SK-N-SH (cell line): ENCODE measurements at regions of chr2 and their contacts with region 1.

Region 1: GRCh38 chr2:67840460-67841068 is 222.2 kb downstream of the C1D start:
- DNase-seq: peak; percentile 73
- H3K4me3 ChIP-seq: 0 out of 4 replicates have a peak overlapping the region, but pooled peaks of 1 of the 2 experiments have one; percentile 22
- H3K27ac ChIP-seq: peak overlapping the region in 1 of 2 experiments; percentile 81; a peak in 2 of 4 replicates
- H3K4me1 ChIP-seq: peaks cover 5 to 20% of the 10 kb centered on the region in 2 experiments; a peak in 3 of 4 replicates
- H3K27me3 ChIP-seq: no peaks in the 10 kb centered on the region
- CTCF ChIP-seq: peak; percentile 93
- EP300 ChIP-seq: peak in 1 of 2 experiments; percentile 96; a peak in 2 of 4 replicates
- RAD21 ChIP-seq: peak; percentile 100

Region 2: GRCh38 chr2:66434679-66435548 is 1405.7 kb before region 1 on chr2 and contains the start of gene MEIS1:
- CTCF ChIA-PET with region 1: interaction called, 41 read pairs
- POLR2A ChIA-PET with region 1: interaction called, 5 read pairs
- DNase-seq: peak; percentile 88
- H3K4me3 ChIP-seq: peak within 1 kb of the TSS; percentile 85 to 90
- H3K27ac ChIP-seq: peak within 1 kb of the TSS; percentile 76 to 81
- H3K4me1 ChIP-seq: peaks cover 0 to 20% of the 10 kb centered on the region in 2 experiments; a peak in 2 of 4 replicates
- H3K27me3 ChIP-seq: no peaks in the 10 kb centered on the region
- CTCF ChIP-seq: peak; percentile 11; the same call in 1 of the 2 replicates
- EP300 ChIP-seq: peak in 1 of 2 experiments; percentile 5; a peak in 1 of 4 replicates
- RAD21 ChIP-seq: peak; percentile 22
- polyA plus RNA-seq, gene MEIS1: 16.9 and 21.8 TPM in 2 replicates

Region 3: GRCh38 chr2:67476809-67477790 is 363.5 kb before region 1 on chr2:
- CTCF ChIA-PET with region 1: interaction called, 11 read pairs
- POLR2A ChIA-PET with region 1: no interaction called
- DNase-seq: peak; percentile 33
- H3K4me3 ChIP-seq: no peak overlapping the region
- H3K27ac ChIP-seq: peak overlapping the region in 1 of 2 experiments; percentile 22; a peak in 1 of 4 replicates
- H3K4me1 ChIP-seq: no peaks in the 10 kb centered on the region; a peak in 2 of 4 replicates
- H3K27me3 ChIP-seq: no peaks in the 10 kb centered on the region
- CTCF ChIP-seq: peak; percentile 73
- EP300 ChIP-seq: no peak
- RAD21 ChIP-seq: peak; percentile 84

Region 4: GRCh38 chr2:67666386-67667053 is 174.0 kb before region 1 on chr2:
- CTCF ChIA-PET with region 1: interaction called, 10 read pairs
- POLR2A ChIA-PET with region 1: no interaction called
- DNase-seq: no peak
- H3K4me3 ChIP-seq: no peak overlapping the region
- H3K27ac ChIP-seq: peak overlapping the region in 1 of 2 experiments; percentile 72; a peak in 2 of 4 replicates
- H3K4me1 ChIP-seq: peaks cover 0 to 14% of the 10 kb centered on the region in 2 experiments; a peak in 2 of 4 replicates
- H3K27me3 ChIP-seq: no peaks in the 10 kb centered on the region
- CTCF ChIP-seq: no peak
- EP300 ChIP-seq: no peak
- RAD21 ChIP-seq: no peak

Region 5: DNA sequence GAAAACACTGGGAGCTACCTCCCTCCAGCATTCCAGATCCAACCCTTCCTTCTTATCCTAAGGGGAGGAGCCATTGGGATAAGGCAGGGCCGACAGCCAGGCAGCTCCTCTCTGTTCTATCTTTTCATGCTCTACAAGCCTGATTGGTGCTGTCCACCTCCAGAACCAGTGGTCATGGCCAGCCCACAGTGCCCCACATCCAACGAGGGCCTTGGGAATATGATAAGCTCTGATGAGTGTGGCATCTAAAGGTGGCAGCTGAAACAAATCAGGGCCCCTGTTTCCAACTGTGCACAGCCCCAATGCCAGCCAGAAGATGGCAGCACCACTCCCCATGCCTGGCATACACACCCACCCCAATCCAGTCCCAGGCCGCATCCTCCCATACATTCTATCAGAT is 107.0 kb before region 1 on chr2:
- CTCF ChIA-PET with region 1: interaction called, 26 read pairs
- POLR2A ChIA-PET with region 1: no interaction called
- DNase-seq: peak; percentile 54
- H3K4me3 ChIP-seq: no peak overlapping the region
- H3K27ac ChIP-seq: peak overlapping the region in 1 of 2 experiments; percentile 16; a peak in 1 of 4 replicates
- H3K4me1 ChIP-seq: peaks cover 0 to 3% of the 10 kb centered on the region in 2 experiments; a peak in 1 of 4 replicates
- H3K27me3 ChIP-seq: no peaks in the 10 kb centered on the region
- CTCF ChIP-seq: peak; percentile 48
- EP300 ChIP-seq: no peak
- RAD21 ChIP-seq: peak; percentile 63

Region 6: GRCh38 chr2:67760995-67761394 is 79.6 kb before region 1 on chr2:
- CTCF ChIA-PET with region 1: interaction called, 12 read pairs
- POLR2A ChIA-PET with region 1: interaction called, 3 read pairs
- DNase-seq: no peak
- H3K4me3 ChIP-seq: no peak overlapping the region
- H3K27ac ChIP-seq: no peak overlapping the region
- H3K4me1 ChIP-seq: peaks cover 0 to 19% of the 10 kb centered on the region in 2 experiments; a peak in 3 of 4 replicates
- H3K27me3 ChIP-seq: no peaks in the 10 kb centered on the region
- CTCF ChIP-seq: no peak
- EP300 ChIP-seq: no peak
- RAD21 ChIP-seq: no peak

Region 7: DNA sequence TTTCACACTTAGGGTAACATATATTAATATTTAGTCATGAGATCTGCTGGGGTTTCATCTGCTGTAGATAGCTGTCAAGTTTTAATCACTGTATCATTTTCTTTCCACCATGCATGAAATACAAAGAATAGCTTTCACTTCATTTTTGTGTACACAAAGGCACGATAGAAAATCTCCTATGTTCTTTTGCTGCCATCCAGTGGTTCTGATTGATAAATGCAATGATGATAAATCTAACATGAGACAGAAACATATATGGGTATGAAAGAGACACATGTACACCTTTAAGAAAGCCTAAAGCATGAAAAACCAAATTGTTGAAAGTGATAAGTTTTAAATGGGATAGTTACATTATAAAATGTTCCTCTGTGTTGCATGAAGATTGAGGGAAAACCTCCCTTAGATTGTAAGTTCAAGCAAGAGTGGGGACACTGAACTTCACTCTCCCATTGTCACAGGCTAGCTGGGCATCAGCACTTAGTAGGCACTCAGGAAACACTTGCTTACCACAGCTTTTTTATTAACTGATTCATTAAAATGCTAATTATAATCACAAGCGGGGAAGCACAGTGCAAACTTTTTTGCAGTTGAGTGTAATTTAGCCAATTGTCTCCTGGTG is 191.1 kb after region 1 on chr2:
- CTCF ChIA-PET with region 1: interaction called, 150 read pairs
- POLR2A ChIA-PET with region 1: no interaction called
- DNase-seq: peak; percentile 48
- H3K4me3 ChIP-seq: no peak overlapping the region
- H3K27ac ChIP-seq: peak overlapping the region; percentile 50 to 80
- H3K4me1 ChIP-seq: peaks cover 4 to 23% of the 10 kb centered on the region in 2 experiments
- H3K27me3 ChIP-seq: no peaks in the 10 kb centered on the region
- CTCF ChIP-seq: peak; percentile 77
- EP300 ChIP-seq: no peak
- RAD21 ChIP-seq: peak; percentile 97

Region 8: GRCh38 chr2:68134554-68134953 is 294.0 kb after region 1 on chr2:
- CTCF ChIA-PET with region 1: no interaction called
- POLR2A ChIA-PET with region 1: no interaction called
- DNase-seq: no peak
- H3K4me3 ChIP-seq: no peak overlapping the region
- H3K27ac ChIP-seq: no peak overlapping the region
- H3K4me1 ChIP-seq: no peaks in the 10 kb centered on the region
- H3K27me3 ChIP-seq: no peaks in the 10 kb centered on the region
- CTCF ChIP-seq: no peak
- EP300 ChIP-seq: no peak
- RAD21 ChIP-seq: peak; percentile 15; the same call in 1 of the 2 replicates